ENCODE measurements at regions of chr5 and their contacts with region 1.

Region 1: GRCh38 chr5:121949867-121950266 is 11.9 kb upstream of the SRFBP1 start:
- DNase-seq: peak; percentile 46
- H3K4me3 ChIP-seq: no peak overlapping the region
- H3K27ac ChIP-seq: no peak overlapping the region
- H3K4me1 ChIP-seq: no peaks in the 10 kb centered on the region
- H3K27me3 ChIP-seq: no peaks in the 10 kb centered on the region
- CTCF ChIP-seq: peak; percentile 36 to 38
- POLR2A ChIP-seq: no peak

Region 2: DNA sequence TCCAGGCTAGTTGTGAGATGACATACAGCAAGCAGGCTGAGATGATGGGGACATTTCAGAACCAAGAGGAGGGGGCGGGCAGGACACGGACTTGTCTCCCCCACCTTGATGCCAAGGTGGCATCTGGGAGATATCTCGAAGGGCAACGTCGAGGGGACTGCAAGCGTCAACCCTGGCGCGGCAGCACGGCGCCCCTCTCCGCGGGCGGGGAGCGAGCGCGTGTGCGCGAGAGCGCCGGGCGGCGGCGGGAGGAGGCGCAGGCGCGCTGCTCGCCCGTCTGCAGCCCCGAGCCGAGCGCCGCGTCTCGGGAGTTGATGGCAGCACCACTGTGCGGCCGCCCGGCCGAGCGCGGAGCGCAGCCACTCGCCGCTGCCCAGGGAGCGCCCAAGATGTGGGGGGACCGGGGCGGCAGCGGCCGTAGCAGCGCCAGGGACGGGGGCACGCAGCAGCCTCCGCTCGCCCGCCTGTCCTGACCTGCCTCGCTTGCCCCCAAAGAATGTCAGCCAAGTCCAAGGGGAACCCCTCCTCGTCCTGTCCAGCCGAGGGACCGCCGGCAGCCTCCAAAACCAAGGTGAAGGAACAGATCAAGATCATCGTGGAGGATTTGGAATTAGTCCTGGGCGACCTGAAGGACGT is 1485.8 kb before region 1 on chr5 and contains the start of gene PRR16:
- CTCF ChIA-PET with region 1: interaction called, 6 read pairs
- POLR2A ChIA-PET with region 1: no interaction called
- dilution Hi-C with region 1: no loop called
- intact Hi-C with region 1: loop called (anchors 5 kb)
- DNase-seq: peak; percentile 62
- H3K4me3 ChIP-seq: peak within 1 kb of the TSS; percentile 61 to 84 (median 81)
- H3K27ac ChIP-seq: no peak within 1 kb of the TSS
- H3K4me1 ChIP-seq: peaks cover 16% of the 10 kb centered on the region
- H3K27me3 ChIP-seq: peaks cover 1 to 24% of the 10 kb centered on the region in 2 experiments
- CTCF ChIP-seq: peak; percentile 3 to 25
- POLR2A ChIP-seq: no peak
- total RNA-seq, gene PRR16: 0.91 and 2.3 TPM in 2 replicates

Region 3: DNA sequence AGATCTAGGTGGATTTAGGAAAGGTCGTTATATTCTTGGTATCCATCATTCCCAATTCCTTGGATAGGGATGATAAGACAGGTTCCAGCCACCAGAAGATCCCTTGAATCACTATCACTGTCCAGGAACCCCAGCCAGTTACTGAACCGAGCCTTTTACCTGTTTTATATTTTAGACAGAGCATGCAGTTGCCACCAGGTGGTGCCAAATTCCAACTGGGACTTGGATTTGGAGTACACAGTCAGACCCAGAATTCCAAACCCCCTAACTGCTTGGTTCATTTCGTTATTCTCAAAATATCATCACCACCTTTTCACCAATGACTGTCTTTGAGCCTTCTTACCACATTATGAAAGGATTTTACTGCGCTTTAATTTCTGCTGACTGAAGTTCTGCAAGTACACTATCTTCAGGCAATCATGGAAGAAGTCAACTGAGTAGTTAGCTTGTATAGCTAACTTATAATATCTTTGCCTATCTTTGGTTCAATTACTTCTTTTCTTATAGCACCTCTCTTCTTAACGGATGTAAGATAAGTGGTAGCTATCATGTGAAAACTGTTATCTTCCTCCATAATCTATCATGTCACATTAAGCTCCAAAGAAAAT is 1293.9 kb before region 1 on chr5:
- CTCF ChIA-PET with region 1: interaction called, 94 read pairs
- POLR2A ChIA-PET with region 1: interaction called, 3 read pairs
- dilution Hi-C with region 1: no loop called
- intact Hi-C with region 1: loop called (anchors 2 kb)
- DNase-seq: peak; percentile 19
- H3K4me3 ChIP-seq: no peak overlapping the region
- H3K27ac ChIP-seq: no peak overlapping the region
- H3K4me1 ChIP-seq: no peaks in the 10 kb centered on the region
- H3K27me3 ChIP-seq: no peaks in the 10 kb centered on the region
- CTCF ChIP-seq: peak; percentile 36 to 57
- POLR2A ChIP-seq: no peak

Region 4: GRCh38 chr5:120817044-120817985 is 1132.6 kb before region 1 on chr5:
- CTCF ChIA-PET with region 1: interaction called, 107 read pairs
- POLR2A ChIA-PET with region 1: no interaction called
- dilution Hi-C with region 1: no loop called
- intact Hi-C with region 1: loop called (anchors 2 kb)
- DNase-seq: peak; percentile 17
- H3K4me3 ChIP-seq: no peak overlapping the region
- H3K27ac ChIP-seq: no peak overlapping the region
- H3K4me1 ChIP-seq: no peaks in the 10 kb centered on the region
- H3K27me3 ChIP-seq: no peaks in the 10 kb centered on the region
- CTCF ChIP-seq: peak; percentile 31 to 46
- POLR2A ChIP-seq: no peak

Region 5: DNA sequence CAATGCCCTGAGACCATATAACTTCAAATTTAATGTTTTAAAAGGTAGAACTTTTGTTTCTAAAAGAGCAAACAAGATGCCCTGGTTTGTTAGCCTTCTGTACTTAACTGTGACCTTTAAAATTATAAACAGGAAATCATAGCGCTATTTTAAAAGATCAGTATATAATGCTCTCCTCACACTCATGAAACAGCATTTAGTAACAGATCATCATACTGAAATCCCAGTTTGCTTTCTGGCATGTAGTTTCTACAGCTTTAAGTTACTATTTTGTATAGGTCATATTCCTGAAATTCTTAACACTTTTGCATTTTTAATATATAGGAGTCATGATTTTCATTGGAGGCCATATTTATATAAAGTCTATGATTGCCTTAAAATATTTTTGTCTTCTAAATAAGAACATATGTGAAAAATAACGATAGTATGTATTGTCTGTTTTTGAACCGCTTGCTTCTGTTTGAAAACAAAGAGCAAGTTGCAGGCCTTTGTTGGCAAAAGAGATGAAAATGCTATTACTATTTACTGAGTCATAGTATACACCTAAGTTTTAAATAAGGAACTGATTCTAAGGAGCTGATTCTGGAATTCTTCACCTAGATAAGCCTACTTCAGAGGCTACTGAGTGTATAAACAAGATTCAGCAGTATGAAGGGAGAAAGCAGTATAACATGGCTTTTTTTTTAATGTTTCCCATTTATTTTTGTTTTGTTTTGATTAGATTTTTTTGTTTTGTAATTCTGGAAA is 32.5 kb after region 1 on chr5:
- CTCF ChIA-PET with region 1: no interaction called
- POLR2A ChIA-PET with region 1: no interaction called
- dilution Hi-C with region 1: no loop called
- intact Hi-C with region 1: no loop called
- DNase-seq: peak; percentile 42
- H3K4me3 ChIP-seq: no peak overlapping the region
- H3K27ac ChIP-seq: peak overlapping the region; percentile 16
- H3K4me1 ChIP-seq: peaks cover 18% of the 10 kb centered on the region
- H3K27me3 ChIP-seq: no peaks in the 10 kb centered on the region
- CTCF ChIP-seq: no peak
- POLR2A ChIP-seq: no peak

Region 6: DNA sequence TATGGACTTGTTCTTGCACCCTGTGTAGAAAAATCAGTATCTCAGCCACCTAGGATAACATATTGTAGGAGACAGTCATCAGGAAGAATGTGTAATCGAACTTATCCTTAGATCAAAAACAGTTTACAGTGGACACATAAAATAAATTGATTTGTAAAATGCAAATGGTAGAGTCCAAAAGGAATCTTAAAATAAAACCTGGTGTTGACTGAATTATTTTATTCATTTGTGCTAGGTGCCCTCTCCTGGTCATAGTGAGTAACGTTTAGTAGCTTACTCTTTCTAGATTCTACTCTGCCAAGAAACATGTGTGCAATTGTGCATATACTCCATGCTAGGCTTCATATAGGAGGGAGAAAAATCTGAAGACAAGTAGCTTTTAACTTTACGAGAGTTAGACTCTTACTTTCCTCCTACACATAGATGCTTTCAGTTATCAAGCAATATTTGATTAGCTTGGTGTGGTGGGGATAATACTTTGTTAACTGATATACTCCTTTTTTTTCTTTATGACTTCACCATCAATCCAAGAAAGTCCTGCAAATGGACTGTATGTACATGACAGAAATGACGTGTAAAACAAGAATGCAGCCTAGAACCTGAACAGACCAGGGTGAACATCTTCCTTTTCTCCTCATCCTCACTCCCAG is 151.9 kb after region 1 on chr5:
- CTCF ChIA-PET with region 1: interaction called, 10 read pairs
- POLR2A ChIA-PET with region 1: no interaction called
- dilution Hi-C with region 1: no loop called
- intact Hi-C with region 1: no loop called
- DNase-seq: peak; percentile 64
- H3K4me3 ChIP-seq: no peak overlapping the region
- H3K27ac ChIP-seq: no peak overlapping the region
- H3K4me1 ChIP-seq: peaks cover 8% of the 10 kb centered on the region
- H3K27me3 ChIP-seq: no peaks in the 10 kb centered on the region
- CTCF ChIP-seq: peak; percentile 26 to 49
- POLR2A ChIP-seq: no peak